Activated T-helper 1 cell treated with anti-CD3 and anti-CD28 coated beads, Interleukin-12 subunit alpha, Interleukin-12 subunit beta, Interleukin-2, Interleukin-4 antibody, amounts not matched to agents 30 ng/mL and 10 ng/mL and 1 ng/mL, durations not matched to agents 14 hours and 24 hours and 36 hours (primary cell): ENCODE measurements at regions of chr12 and their contacts with region 1.

Region 1: DNA sequence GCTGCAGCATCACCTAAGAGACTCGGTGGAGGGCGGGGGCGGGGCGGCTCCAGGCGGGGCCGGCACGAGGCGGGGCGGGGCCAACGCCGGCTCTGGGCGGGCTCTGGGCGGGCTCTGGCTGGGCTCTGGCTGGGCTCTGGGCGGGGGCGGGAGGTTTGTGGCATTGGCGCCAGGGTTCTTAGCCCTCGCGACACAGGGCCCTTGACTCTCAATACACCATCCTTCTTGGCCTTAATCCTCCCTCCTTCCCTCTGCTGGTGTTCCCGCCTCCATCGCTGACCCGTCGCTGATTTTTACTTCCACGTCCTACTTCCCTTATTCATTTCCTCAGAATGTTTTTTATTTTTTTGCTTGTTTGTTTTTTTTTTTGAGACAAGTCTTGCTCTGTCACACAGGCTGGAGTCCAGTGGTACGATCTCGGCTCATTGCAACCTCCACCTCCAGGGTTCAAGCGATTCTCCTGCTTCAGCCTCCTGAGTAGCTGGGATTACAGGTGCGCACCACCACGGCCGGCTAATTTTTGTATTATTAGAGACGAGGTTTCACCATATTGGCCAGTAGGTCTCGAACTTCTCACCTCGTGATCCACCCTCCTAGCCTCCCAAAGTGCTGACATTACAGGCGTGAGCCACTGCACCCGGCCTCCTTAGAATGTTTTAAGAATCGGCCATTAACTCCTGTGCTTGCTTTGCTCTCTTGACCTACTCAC is at the start of gene BLTP3B:
- DNase-seq: peak; percentile 80
- H3K4me3 Mint-ChIP-seq: peak within 1 kb of the TSS; percentile 94
- H3K27ac Mint-ChIP-seq: peak within 1 kb of the TSS; percentile 96
- H3K4me1 Mint-ChIP-seq: peaks cover 44% of the 10 kb centered on the region
- H3K27me3 Mint-ChIP-seq: no peaks in the 10 kb centered on the region
- total RNA-seq, gene BLTP3B: 72.6 and 74.6 TPM in 2 replicates

Region 2: DNA sequence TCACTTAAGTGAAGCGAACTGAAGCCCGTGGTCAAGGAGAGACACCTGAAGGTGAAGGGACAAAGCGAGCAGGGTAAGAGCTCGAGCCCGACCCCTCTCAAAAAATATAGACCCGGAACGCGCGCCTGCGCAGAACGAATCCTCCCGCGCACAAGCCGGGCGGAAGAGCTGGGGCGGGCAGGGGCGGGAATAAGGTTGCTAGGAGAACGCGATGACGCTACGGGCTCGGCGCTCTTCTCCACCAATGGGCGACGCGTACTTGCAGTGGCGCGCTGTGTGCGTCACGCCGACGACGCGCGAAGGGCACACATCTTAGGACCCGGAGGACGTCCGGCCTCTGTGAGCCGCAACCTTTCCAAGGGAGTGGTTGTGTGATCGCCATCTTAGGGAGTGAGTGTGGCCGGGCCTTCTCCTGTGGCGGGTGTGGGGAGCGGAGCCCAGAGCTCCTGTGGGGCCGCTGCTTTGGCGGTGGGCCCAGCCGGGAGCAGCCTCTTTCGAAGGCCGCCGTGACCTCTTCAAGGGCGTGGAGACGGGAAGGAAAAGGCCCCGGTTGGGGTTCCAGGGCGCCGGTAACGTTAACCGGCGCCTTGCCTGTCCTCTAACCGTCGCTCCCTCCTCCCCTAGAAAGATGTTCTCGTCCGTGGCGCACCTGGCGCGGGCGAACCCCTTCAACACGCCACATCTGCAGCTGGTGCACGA is 1549.5 kb before region 1 on chr12 and contains the start of gene SLC25A3:
- intact Hi-C with region 1: loop called (anchors 5 kb)
- DNase-seq: peak; percentile 92
- H3K4me3 Mint-ChIP-seq: peak within 1 kb of the TSS; percentile 96
- H3K27ac Mint-ChIP-seq: peak within 1 kb of the TSS; percentile 99
- H3K4me1 Mint-ChIP-seq: peaks cover 29% of the 10 kb centered on the region
- H3K27me3 Mint-ChIP-seq: no peaks in the 10 kb centered on the region
- total RNA-seq, gene SLC25A3: 570 and 580 TPM in 2 replicates

Region 3: DNA sequence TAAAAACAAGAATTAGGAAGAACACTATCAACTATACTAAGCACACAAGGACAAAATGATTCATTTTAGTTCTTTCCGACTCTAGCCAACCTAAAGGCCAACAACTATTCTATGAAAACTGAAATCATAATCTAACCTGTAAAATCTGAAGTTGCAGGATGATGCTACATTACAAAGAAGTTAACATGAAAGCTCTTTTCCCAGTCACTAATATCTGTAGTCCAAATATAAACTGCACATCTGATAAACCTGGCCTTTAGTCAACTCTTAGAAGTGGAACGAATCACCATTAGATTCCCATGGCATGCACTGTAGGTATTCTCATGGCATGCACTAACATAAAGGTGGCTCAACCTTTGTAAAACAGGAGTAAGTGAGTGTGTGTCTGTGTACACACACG is 42.0 kb before region 1 on chr12:
- intact Hi-C with region 1: loop called (anchors 2 kb)
- DNase-seq: no peak
- H3K4me3 Mint-ChIP-seq: no peak overlapping the region
- H3K27ac Mint-ChIP-seq: peak overlapping the region; percentile 53
- H3K4me1 Mint-ChIP-seq: peaks cover 15% of the 10 kb centered on the region
- H3K27me3 Mint-ChIP-seq: no peaks in the 10 kb centered on the region

Region 4: DNA sequence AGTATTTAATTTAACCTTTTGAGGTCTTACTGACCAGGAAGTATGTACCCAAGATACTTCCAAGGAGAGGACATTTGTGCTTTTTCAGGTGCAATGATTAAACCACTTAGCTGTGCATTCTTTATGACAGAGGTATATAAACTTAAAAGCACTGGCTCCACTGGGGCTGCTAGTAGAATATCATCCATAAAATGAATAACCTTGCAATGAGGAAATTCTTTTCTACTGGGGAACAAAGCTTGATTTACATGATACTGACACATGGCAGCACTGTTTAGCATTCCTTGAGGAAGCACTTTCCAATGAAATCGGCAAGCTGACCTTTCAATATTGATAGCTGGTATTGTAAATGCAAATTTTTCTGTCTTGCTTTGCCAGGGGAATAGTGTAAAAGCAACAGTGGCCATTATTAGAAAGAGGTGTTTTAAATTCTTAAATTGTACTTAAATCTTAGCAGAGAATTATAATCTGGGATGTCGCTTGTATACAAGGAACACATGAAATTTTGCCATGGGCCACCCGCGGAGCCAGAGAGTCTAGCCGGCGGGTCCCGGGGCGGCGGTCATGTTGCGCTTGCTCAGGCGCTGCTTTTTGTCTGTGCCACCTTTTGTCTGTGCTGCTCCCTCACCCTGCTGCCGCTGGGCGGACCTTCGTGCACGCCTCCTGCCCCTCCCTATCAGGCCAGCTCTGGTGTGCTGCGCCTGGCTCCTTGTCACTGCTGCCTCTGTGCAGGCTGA is 20.6 kb after region 1 on chr12:
- intact Hi-C with region 1: loop called (anchors 1 kb)
- DNase-seq: peak; percentile 64
- H3K4me3 Mint-ChIP-seq: peak overlapping the region; percentile 51
- H3K27ac Mint-ChIP-seq: no peak overlapping the region
- H3K4me1 Mint-ChIP-seq: peaks cover 17% of the 10 kb centered on the region
- H3K27me3 Mint-ChIP-seq: no peaks in the 10 kb centered on the region

Region 5: GRCh38 chr12:100200463-100201181 is 57.6 kb after region 1 on chr12 and contains the start of gene ACTR6:
- intact Hi-C with region 1: loop called (anchors 1 kb)
- DNase-seq: peak; percentile 94
- H3K4me3 Mint-ChIP-seq: peak within 1 kb of the TSS; percentile 100
- H3K27ac Mint-ChIP-seq: peak within 1 kb of the TSS; percentile 100
- H3K4me1 Mint-ChIP-seq: peaks cover 39% of the 10 kb centered on the region
- H3K27me3 Mint-ChIP-seq: no peaks in the 10 kb centered on the region
- total RNA-seq, gene ACTR6: 29.8 and 35.4 TPM in 2 replicates

Region 6: DNA sequence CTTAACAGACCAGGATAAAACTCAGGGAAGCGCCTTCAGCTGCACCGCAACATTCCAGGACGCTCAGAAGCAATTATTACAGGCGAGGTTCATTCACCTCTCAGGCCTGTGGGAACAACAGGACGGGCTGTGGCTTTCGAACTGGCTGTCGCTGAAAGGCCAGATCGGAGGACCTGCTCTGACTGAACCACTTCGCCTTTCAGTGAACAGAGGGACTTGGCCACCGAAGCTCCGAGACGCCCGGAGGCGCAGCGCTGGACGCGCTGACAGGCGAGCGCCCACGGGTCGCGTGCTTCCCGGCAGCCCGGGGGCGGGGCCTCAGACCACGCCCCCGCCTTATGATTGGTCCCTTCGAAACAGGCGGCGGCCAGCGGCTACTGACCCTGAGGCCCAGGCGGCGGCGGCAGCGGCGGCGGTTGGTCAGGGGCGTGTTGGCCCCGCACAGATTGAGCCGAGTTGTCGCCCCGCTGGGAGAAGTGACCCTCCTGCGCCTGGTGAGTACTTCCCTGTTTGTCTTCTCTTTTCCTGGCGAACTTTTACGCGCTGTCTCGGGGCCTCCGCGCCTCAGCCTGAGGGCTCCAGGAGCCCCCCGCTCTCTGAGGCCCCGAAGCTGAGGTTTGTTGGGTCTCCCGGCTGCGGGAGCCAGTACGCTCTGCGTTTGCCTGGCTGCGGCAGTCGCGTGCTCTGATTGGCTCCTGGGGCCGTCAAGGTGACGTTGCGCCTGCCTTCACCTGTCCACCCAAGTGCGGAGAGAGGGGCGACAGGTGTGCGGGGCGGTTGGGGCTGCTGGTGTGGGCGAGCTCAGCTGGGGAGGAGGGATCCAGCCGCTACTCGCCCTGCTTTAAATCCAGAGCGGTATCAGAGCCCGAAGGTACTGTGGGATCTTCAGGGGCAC is 430.5 kb after region 1 on chr12 and contains the start of gene GAS2L3:
- intact Hi-C with region 1: loop called (anchors 5 kb)
- DNase-seq: peak; percentile 69
- H3K4me3 Mint-ChIP-seq: peak within 1 kb of the TSS; percentile 88
- H3K27ac Mint-ChIP-seq: no peak within 1 kb of the TSS
- H3K4me1 Mint-ChIP-seq: peaks cover 13% of the 10 kb centered on the region
- H3K27me3 Mint-ChIP-seq: peaks cover 19% of the 10 kb centered on the region
- total RNA-seq, gene GAS2L3: 0.86 and 1.0 TPM in 2 replicates